Sigmoid colon (tissue), 7 donors: ENCODE measurements at regions of chr7 and their contacts with region 1.

Region 1: GRCh38 chr7:36152756-36153570 is at the start of gene EEPD1:
- DNase-seq: peak; percentile 100
- H3K4me3 ChIP-seq: peak within 1 kb of the TSS; percentile 72 to 86 (median 76)
- H3K27ac ChIP-seq: peak within 1 kb of the TSS; percentile 89 to 97 (median 91)
- H3K4me1 ChIP-seq: peaks cover 0 to 50% (median 46%) of the 10 kb centered on the region in 4 donors
- H3K27me3 ChIP-seq: no peaks in the 10 kb centered on the region
- CTCF ChIP-seq: no peak
- EP300 ChIP-seq: peak in 1 of 4 donors; percentile 4
- POLR2A ChIP-seq: peak; percentile 51 to 55
- total RNA-seq, gene EEPD1: 10.9 to 18.1 (median 13.5) TPM

Region 2: DNA sequence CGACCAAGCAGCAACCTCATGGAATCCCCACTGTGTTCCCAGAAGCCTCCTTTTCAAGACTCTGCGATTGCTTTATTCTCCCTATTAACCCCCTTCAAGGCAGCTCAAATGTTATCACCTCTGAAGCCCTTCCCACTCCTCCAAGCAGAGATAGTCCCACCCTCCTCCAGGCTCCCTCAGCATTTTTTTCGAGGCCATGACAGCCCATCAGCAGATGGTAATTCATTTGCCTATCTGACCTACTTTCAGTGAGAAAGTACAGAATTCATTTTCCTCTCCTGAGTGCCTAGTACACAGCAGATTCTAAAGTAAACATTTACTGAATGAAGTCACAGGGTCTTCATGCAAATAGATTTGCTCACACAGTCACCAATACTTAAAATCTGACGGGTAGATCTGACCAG is 505.8 kb before region 1 on chr7:
- intact Hi-C with region 1: no loop called
- DNase-seq: no peak
- H3K4me3 ChIP-seq: no peak overlapping the region
- H3K27ac ChIP-seq: peak overlapping the region; percentile 44 to 61 (median 51)
- H3K4me1 ChIP-seq: peaks cover 0 to 36% (median 22%) of the 10 kb centered on the region in 4 donors
- H3K27me3 ChIP-seq: no peaks in the 10 kb centered on the region
- CTCF ChIP-seq: no peak
- EP300 ChIP-seq: no peak
- POLR2A ChIP-seq: no peak

Region 3: DNA sequence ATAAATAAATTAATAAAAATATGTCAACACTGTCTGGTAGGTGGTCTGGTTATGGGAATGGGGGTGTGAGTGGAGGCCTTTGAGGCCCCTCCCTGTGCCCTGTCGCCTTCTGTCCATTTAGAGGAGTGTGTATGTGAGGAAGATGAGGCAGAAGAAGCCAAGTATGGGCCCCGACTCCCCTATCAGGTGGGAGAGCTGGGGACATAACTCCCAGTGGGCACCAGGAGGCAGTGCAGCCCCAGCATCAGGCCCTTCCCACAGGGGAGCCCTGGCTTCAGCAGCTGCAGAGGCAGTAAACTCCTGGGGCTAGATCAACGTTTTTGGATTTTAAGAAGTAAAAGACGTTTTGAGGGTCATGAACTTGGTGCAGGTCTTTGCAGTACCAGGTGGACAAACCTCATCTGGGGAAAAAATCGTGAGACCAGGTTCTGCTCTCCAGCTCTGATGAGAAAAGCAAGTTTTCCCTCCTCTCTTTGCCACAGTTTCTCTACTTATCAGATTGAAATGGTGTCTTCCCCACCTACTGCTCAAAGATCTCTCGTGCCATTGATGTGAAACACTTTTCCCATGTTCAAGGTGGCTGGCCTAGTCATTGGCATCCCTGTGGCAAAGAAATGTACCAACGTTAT is 167.7 kb before region 1 on chr7:
- intact Hi-C with region 1: loop called (anchors 5 kb)
- DNase-seq: peak; percentile 89
- H3K4me3 ChIP-seq: no peak overlapping the region
- H3K27ac ChIP-seq: no peak overlapping the region
- H3K4me1 ChIP-seq: peaks cover 0 to 19% (median 14%) of the 10 kb centered on the region in 4 donors
- H3K27me3 ChIP-seq: no peaks in the 10 kb centered on the region
- CTCF ChIP-seq: peak; percentile 85 to 94 (median 91)
- EP300 ChIP-seq: no peak
- POLR2A ChIP-seq: no peak

Region 4: GRCh38 chr7:36037121-36037662 is 115.8 kb before region 1 on chr7:
- intact Hi-C with region 1: no loop called
- DNase-seq: no peak
- H3K4me3 ChIP-seq: no peak overlapping the region
- H3K27ac ChIP-seq: peak overlapping the region in 3 of 4 donors; percentile 23 to 35 (median 32)
- H3K4me1 ChIP-seq: peaks cover 0 to 14% (median 13%) of the 10 kb centered on the region in 4 donors
- H3K27me3 ChIP-seq: no peaks in the 10 kb centered on the region
- CTCF ChIP-seq: no peak
- EP300 ChIP-seq: no peak
- POLR2A ChIP-seq: no peak

Region 5: DNA sequence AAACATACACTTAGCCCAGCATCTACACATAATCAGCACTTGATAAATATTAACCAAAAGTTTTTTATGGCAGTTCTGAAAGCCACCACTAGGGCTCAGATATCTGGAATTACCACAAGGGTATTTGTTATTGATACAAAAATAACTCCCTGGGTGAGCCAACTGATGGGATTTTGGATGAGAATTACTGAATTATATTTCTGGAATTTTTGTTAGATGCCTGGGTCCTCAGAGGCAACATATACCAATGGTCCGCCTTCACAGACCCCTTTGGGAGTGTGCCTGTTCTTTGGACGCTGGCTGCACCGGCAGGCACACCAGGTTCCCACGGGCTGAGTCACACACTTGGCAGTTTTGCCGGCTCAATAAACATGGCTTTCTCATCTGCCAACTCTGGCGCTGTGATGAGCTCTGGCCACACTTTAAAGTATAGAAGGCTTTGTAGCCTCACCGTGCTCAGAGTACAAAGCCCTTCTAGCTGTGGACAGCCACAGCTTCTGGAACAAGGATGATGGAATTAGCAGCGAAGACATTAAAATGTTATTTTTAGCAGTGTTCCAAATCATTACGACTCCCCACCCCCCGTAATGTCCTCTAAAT is 24.4 kb before region 1 on chr7:
- intact Hi-C with region 1: loop called (anchors 1 kb)
- DNase-seq: peak; percentile 95
- H3K4me3 ChIP-seq: no peak overlapping the region
- H3K27ac ChIP-seq: peak overlapping the region; percentile 64 to 79 (median 74)
- H3K4me1 ChIP-seq: peaks cover 0 to 34% (median 26%) of the 10 kb centered on the region in 4 donors
- H3K27me3 ChIP-seq: no peaks in the 10 kb centered on the region
- CTCF ChIP-seq: peak; percentile 70 to 95 (median 84)
- EP300 ChIP-seq: peak in 3 of 4 donors; percentile 12 to 56 (median 33)
- POLR2A ChIP-seq: no peak

Region 6: GRCh38 chr7:36264123-36264801 is 111.3 kb after region 1 on chr7:
- intact Hi-C with region 1: loop called (anchors 5 kb)
- DNase-seq: peak; percentile 86
- H3K4me3 ChIP-seq: no peak overlapping the region
- H3K27ac ChIP-seq: peak overlapping the region; percentile 58 to 86 (median 71)
- H3K4me1 ChIP-seq: peaks cover 0 to 86% (median 78%) of the 10 kb centered on the region in 4 donors
- H3K27me3 ChIP-seq: no peaks in the 10 kb centered on the region
- CTCF ChIP-seq: no peak
- EP300 ChIP-seq: peak in 2 of 4 donors; percentile 18 to 54
- POLR2A ChIP-seq: no peak

Region 7: GRCh38 chr7:36291387-36292316 is 138.7 kb after region 1 on chr7:
- intact Hi-C with region 1: loop called (anchors 2 kb)
- DNase-seq: peak; percentile 92
- H3K4me3 ChIP-seq: peak overlapping the region; percentile 23 to 40 (median 35)
- H3K27ac ChIP-seq: peak overlapping the region; percentile 78 to 91 (median 82)
- H3K4me1 ChIP-seq: peaks cover 0 to 29% (median 25%) of the 10 kb centered on the region in 4 donors
- H3K27me3 ChIP-seq: no peaks in the 10 kb centered on the region
- CTCF ChIP-seq: peak; percentile 94 to 99 (median 98)
- EP300 ChIP-seq: peak in 1 of 4 donors; percentile 12
- POLR2A ChIP-seq: no peak